KBM-7 (cell line): ENCODE measurements at regions of chr1 and their contacts with region 1.

Region 1: GRCh38 chr1:23177438-23178380 is 9.1 kb upstream of the LUZP1 start:
- DNase-seq: peak; percentile 87

Region 2: GRCh38 chr1:22976461-22977243 is 201.1 kb before region 1 on chr1:
- in situ Hi-C with region 1: loop called (anchors 25 kb)
- DNase-seq: peak; percentile 87

Region 3: DNA sequence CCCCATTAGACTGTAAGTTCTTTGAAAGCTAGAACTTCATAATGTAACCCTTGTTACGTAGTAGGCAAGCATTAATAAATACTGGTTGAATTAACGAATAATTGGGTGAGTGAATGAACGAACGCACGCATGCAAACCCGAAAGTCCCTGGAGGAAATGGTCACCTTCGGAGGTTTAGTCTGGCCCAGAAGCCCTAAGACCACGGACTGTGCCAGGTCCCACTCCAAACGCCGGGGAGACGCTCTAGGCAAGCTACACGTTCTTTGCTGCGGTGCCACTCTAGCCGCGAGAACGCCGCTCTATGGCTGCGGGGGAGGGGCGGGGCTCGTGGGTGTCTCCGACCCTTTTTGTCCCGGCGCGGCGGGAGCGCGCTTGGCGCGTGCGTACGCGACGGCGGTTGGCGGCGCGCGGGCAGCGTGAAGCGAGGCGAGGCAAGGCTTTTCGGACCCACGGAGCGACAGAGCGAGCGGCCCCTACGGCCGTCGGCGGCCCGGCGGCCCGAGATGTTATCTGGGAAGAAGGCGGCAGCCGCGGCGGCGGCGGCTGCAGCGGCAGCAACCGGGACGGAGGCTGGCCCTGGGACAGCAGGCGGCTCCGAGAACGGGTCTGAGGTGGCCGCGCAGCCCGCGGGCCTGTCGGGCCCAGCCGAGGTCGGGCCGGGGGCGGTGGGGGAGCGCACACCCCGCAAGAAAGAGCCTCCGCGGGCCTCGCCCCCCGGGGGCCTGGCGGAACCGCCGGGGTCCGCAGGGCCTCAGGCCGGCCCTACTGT is 158.4 kb before region 1 on chr1 and contains the start of gene KDM1A:
- in situ Hi-C with region 1: no loop called
- DNase-seq: peak; percentile 96

Region 4: DNA sequence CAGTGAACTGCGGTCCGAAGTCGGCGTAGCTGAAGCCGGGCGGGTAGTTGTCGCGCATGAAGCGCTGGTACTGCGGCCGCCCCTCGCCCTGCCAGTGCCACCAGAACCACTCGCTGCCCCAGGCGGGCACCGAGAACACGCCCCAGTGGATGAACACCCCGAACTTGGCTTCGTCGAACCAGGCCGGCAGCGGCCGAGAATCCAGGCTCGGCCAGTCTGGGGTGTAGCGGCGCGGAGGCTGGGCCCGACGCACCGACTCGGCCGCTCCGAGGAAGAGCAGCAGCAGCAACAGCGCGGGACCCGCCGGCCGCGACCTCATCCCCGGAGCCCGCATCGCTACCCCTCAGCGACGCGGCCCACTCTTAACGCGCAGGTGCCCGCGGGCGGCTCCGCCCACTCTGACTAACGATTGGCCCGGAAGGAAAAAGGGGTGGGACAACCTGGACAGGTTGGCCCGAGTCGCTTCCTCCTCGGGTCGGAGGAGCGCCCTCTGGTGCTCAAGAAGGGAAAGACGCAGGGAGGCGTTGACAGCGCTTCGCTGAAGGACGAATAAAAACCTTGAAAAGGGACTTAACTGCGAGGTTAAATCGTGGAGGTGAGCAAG is 690.3 kb after region 1 on chr1 and contains the start of gene FUCA1:
- in situ Hi-C with region 1: no loop called
- DNase-seq: peak; percentile 95